Ascending aorta (tissue), 2 donors: ENCODE measurements at regions of chr15 and their contacts with region 1.

Region 1: DNA sequence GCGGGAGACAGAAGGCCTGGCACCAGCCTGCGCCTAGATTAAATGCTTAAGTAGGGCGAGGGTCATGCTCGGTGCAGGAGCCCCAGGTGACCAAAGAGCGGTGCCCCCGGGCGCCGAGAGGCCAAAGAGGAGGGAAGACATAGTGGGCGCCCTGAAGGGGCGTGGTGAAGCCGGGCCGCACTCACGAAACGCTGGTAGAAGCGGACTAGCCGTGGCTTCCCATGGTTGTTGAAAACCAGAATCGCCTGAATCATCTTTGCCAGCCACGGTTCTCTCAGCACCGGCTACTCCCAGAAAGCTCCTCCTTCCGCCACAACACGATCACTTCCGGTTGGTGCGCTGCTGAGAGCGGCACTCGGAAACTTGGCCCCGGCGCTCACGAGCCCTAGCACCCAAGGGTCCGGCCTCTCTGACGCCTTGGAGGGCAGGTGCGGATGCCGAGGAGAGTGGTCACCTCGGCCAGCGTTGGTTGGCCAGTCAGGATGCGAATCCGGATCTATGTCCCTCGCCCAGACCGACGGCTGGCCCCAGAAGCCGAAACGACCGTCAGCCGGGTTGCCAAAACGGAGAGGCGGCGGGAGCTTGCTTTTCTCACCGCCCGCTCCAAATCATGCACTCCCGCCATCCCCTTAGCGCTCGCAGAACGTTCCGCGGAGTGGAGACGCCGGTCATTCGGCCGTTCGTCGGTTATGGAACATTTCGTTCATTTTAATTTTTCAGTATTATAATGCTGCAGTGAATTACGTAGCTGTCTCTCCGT is at the start of gene AP3S2:
- DNase-seq: peak; percentile 64 to 95
- H3K4me3 ChIP-seq: peak within 1 kb of the TSS; percentile 76 to 87
- H3K27ac ChIP-seq: peak within 1 kb of the TSS; percentile 85 to 90
- H3K4me1 ChIP-seq: peaks cover 0 to 6% of the 10 kb centered on the region in 2 donors
- H3K27me3 ChIP-seq: no peaks in the 10 kb centered on the region
- CTCF ChIP-seq: no peak
- total RNA-seq, gene AP3S2: 16.0 TPM

Region 2: GRCh38 chr15:89575146-89575655 is 318.7 kb before region 1 on chr15 and contains the start of gene TICRR:
- intact Hi-C with region 1: no loop called
- DNase-seq: peak; percentile 93 to 98
- H3K4me3 ChIP-seq: peak within 1 kb of the TSS; percentile 61 to 77
- H3K27ac ChIP-seq: no peak within 1 kb of the TSS
- H3K4me1 ChIP-seq: peaks cover 7 to 8% of the 10 kb centered on the region in 2 donors
- H3K27me3 ChIP-seq: no peaks in the 10 kb centered on the region
- CTCF ChIP-seq: no peak
- total RNA-seq, gene TICRR: not detected

Region 3: DNA sequence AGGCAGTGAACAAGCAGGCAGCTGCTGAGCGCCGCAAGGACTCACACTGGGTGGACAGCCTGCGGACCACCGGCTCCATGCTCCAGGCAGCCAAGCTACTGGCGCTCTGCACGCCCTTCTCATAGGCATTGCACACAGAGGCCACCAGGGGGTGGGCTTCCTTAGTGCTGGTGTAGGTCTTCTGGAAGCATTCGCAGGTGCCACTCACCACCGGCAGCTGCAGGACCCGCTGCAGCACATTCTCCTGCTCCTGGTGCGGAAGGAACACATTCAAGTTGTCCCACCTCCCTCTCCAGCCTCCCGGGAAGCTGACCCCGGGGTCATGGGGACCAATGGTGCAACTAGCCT is 220.7 kb before region 1 on chr15:
- intact Hi-C with region 1: loop called (anchors 10 kb)
- DNase-seq: no peak
- H3K4me3 ChIP-seq: no peak overlapping the region
- H3K27ac ChIP-seq: peak overlapping the region; percentile 89 to 92
- H3K4me1 ChIP-seq: peaks cover 19 to 28% of the 10 kb centered on the region in 2 donors
- H3K27me3 ChIP-seq: no peaks in the 10 kb centered on the region
- CTCF ChIP-seq: peak in 1 of 3 experiments; percentile 26

Region 4: DNA sequence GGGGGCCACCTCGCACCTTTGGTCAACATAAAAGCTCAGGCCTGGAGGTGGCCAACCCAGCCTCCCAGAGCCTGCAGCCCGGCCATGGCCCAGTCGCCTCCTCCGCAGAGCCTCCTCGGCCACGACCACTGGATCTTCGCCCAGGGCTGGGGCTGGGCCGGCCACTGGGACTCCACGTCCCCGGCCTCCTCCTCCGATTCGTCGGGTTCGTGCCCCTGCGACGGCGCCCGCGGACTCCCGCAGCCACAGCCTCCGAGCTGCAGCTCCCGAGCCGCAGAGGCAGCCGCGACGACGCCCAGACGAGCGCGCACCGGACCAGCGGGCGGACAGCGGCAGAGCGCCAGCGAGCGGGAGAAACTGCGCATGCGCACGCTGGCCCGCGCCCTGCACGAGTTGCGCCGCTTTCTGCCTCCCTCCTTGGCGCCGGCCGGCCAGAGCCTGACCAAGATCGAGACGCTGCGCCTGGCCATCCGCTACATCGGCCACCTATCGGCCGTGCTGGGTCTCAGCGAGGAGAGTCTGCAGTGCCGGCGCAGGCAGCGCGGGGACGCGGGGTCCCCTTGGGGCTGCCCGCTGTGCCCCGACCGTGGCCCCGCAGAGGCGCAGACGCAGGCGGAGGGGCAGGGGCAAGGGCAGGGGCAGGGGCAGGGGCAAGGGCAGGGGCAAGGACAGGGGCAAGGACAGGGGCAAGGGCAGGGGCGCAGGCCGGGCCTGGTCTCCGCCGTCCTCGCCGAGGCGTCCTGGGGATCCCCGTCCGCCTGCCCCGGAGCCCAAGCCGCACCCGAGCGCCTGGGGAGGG is 117.4 kb before region 1 on chr15 and contains the start of gene MESP2:
- intact Hi-C with region 1: no loop called
- DNase-seq: peak in 1 of 2 donors; percentile 87
- H3K4me3 ChIP-seq: peak within 1 kb of the TSS; percentile 50 to 59
- H3K27ac ChIP-seq: no peak within 1 kb of the TSS
- H3K4me1 ChIP-seq: peaks cover 0 to 5% of the 10 kb centered on the region in 2 donors
- H3K27me3 ChIP-seq: no peaks in the 10 kb centered on the region
- CTCF ChIP-seq: peak; percentile 35 to 55 (median 43)
- total RNA-seq, gene MESP2: not detected

Region 5: DNA sequence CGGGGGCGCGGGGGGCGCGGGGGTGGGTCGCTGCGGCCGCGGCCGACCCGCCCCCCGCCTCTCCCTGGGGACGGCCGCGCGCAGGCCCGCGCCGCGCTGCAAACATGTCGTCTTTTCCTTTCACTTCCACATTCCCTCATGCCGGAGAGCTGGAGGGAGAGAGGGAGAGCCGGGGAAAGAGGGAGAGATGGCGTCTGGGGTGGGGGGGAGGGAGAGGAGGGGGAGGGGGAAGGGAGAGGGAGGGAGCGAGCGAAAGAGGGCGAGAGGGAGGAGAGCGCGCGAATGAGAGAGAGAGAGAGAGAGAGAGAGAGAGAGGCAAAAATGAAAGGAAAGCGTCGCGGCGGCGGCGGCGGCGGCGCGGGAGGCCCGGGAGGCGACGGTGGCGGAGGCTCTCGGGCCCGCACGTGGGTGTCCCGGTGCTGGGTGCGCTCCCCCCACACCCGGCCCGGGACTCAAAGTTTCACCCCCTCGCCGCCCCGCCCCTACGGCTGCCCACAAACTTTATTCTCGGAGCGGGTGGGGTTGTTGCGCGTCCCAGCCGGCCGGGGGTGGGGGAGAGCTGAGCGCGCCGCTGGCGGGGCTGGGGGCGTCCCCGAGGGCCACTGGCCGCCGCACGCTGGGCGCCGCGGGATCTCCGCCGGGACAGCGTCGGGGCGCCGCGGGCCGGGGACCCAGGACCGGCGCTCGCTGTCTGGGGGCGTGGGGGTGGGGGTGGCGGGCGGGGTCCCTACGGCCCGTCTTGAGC is 108.0 kb after region 1 on chr15:
- intact Hi-C with region 1: loop called (anchors 5 kb)
- DNase-seq: peak in 1 of 2 donors; percentile 76
- H3K4me3 ChIP-seq: peak overlapping the region; percentile 86 to 96
- H3K27ac ChIP-seq: peak overlapping the region; percentile 81 to 90
- H3K4me1 ChIP-seq: peaks cover 0 to 34% of the 10 kb centered on the region in 2 donors
- H3K27me3 ChIP-seq: no peaks in the 10 kb centered on the region
- CTCF ChIP-seq: no peak

Region 6: GRCh38 chr15:90071208-90071807 is 177.4 kb after region 1 on chr15:
- intact Hi-C with region 1: loop called (anchors 2 kb)
- DNase-seq: peak; percentile 50 to 90
- H3K4me3 ChIP-seq: no peak overlapping the region
- H3K27ac ChIP-seq: no peak overlapping the region
- H3K4me1 ChIP-seq: peaks cover 0 to 2% of the 10 kb centered on the region in 2 donors
- H3K27me3 ChIP-seq: no peaks in the 10 kb centered on the region
- CTCF ChIP-seq: peak; percentile 59 to 72 (median 66)